ENCODE measurements at regions of chr3 and their contacts with region 1.

Region 1: DNA sequence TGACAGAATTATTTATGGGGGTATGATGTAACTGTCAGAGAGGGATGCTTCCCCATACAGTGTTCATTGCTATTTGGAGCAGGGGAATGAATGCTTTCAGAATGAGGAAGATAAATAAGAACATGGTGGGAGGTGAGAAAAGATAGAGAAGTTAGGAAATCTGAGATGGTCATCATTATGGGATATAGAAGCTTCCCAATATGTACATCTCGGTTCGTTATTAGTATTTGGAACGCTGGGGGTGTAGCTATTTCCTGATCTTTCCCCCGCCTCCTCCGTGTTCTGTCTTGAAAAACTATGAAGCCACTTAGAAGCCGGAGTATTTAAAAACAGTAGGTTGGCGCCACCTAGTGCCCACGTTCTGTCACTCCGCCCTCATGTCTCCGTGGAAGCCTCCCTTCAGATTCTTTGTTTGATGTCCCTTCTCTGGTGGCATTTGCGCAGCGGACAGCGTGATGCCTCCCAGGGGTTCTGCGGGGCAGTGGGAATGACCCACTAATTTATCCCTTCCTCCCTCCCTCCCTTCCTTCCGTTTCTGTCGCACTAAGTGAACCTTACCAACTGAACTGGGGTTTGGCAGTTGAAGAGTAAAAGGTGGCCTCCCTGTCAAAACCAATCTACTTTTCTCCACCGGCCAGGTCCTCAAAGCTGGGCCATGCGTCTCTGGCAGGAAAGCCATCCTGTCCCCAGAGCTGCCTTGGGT is 184.5 kb downstream of the FEZF2 start:
- DNase-seq: peak; percentile 48
- ATAC-seq: peak; percentile 63
- H3K4me3 ChIP-seq: no peak overlapping the region
- H3K27ac ChIP-seq: no peak overlapping the region
- H3K4me1 ChIP-seq: peaks cover 21% of the 10 kb centered on the region
- H3K27me3 ChIP-seq: no peaks in the 10 kb centered on the region
- CTCF ChIP-seq: peak; percentile 82
- EP300 ChIP-seq: no peak
- POLR2A ChIP-seq: no peak
- RAD21 ChIP-seq: peak; percentile 66; the same call in 1 of the 2 replicates

Region 2: DNA sequence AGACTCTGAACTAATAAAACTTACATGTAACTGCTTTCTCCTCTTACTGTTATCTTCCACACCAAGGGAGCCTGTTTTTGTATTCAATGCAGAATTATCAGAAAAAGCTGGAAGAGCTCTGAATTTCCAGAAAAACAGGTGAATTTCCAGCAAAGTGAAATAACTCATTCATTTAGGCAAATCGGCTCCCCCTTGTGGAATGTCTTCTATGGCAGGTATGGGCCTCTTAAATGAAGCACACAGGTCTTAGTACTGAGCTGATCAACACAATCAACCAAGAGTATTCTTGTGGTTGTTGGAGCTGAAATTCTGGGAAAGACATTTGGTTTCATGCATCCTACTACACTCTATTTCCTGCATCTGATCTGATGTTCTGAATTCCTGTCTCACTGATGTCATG is 658.5 kb before region 1 on chr3:
- CTCF ChIA-PET with region 1: no interaction called
- POLR2A ChIA-PET with region 1: no interaction called
- in situ Hi-C with region 1: no loop called
- intact Hi-C with region 1: loop called (anchors 1 kb)
- DNase-seq: peak; percentile 59
- ATAC-seq: peak; percentile 75
- H3K4me3 ChIP-seq: no peak overlapping the region
- H3K27ac ChIP-seq: no peak overlapping the region
- H3K4me1 ChIP-seq: peaks cover 19% of the 10 kb centered on the region; the same call in 1 of the 2 replicates
- H3K27me3 ChIP-seq: no peaks in the 10 kb centered on the region
- CTCF ChIP-seq: peak; percentile 53
- EP300 ChIP-seq: no peak
- POLR2A ChIP-seq: no peak
- RAD21 ChIP-seq: 0 out of 2 replicates have a peak, but pooled peaks have one; percentile 17

Region 3: DNA sequence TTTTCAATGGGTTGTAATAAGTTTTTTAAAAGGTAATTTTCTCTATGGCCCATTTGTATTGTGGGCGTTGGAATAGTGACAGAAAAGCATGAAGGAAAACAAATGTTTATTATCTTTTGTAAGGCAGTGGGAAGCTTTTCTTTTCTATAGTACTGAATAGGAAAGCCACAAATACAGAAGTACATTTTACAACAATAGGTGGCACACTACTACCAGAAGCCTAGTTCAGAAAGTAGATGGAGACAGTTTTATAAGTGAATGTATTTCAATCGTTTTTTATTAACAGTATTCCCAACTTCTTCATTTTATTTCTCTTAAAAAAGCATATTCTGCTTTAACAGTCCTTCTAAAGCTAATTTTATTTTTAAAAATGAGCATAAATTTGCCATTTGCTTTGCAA is 330.8 kb before region 1 on chr3:
- CTCF ChIA-PET with region 1: no interaction called
- POLR2A ChIA-PET with region 1: no interaction called
- in situ Hi-C with region 1: loop called (anchors 25 kb)
- intact Hi-C with region 1: loop called (anchors 5 kb)
- DNase-seq: no peak
- ATAC-seq: no peak
- H3K4me3 ChIP-seq: no peak overlapping the region
- H3K27ac ChIP-seq: no peak overlapping the region
- H3K4me1 ChIP-seq: peaks cover 10% of the 10 kb centered on the region
- H3K27me3 ChIP-seq: no peaks in the 10 kb centered on the region
- CTCF ChIP-seq: peak; percentile 43; the same call in 1 of the 2 replicates
- EP300 ChIP-seq: no peak
- POLR2A ChIP-seq: no peak
- RAD21 ChIP-seq: no peak

Measured in HepG2 (cell line).